BJ (cell line): ENCODE measurements at regions of chr20 and their contacts with region 1.

Region 1: DNA sequence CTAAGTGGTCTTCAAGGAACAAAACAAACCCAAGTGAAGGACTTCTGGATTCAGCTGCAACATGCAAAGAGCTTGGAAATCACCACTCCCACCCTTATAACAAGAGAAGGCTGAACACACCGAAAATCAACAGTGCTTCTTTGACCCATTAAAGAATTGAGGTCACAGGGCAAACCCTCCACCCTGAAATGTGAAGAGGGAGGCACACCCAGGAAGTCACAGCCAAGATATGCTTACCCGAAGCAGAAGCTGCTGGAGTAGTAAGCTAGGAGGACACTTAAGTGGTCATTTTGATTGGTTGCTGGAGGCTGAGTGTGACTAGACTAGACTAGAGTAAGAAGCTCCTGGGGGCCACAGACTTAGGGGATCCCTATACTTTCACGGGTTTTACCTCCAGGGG is 188.2 kb upstream of the SSTR4 start:
- DNase-seq: no peak
- H3K4me3 ChIP-seq: no peak overlapping the region
- H3K27me3 ChIP-seq: no peaks in the 10 kb centered on the region
- CTCF ChIP-seq: no peak

Region 2: DNA sequence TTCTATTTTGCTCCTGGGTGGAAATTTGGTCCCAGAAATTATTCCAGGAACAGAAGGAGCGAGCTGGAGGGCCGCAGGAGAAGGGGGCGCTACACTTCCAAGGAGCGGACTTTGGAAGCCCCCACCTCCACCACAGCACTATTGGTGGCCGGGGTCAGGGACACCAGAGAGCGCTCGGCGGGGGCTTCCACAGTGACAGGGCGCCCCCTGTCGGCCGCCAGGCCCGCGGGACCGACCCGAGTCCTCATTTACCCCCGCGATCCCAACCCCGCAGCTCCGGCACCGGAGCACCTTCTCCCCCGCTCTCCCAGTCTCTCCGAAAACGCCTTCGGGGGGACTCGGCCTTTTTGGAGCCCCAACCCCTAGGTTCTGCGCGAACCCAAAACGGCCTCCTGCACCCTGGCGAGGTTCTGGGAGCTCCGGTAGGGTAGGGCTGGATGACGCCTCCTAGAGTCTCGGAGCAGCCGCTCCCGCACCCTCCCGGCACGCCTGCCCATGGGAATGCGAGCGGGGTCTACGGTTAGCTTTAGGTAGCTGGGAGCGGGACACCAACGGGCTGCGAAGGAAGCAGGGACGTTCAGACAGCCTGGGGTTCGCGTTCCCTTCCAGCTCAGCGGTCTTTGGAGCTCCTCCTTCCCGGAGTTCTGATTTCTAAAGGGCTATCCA is 260.1 kb before region 1 on chr20:
- CTCF ChIA-PET with region 1: no interaction called
- POLR2A ChIA-PET with region 1: no interaction called
- DNase-seq: no peak
- H3K4me3 ChIP-seq: no peak overlapping the region
- H3K27me3 ChIP-seq: peaks cover 34% of the 10 kb centered on the region
- CTCF ChIP-seq: peak; percentile 32

Region 3: DNA sequence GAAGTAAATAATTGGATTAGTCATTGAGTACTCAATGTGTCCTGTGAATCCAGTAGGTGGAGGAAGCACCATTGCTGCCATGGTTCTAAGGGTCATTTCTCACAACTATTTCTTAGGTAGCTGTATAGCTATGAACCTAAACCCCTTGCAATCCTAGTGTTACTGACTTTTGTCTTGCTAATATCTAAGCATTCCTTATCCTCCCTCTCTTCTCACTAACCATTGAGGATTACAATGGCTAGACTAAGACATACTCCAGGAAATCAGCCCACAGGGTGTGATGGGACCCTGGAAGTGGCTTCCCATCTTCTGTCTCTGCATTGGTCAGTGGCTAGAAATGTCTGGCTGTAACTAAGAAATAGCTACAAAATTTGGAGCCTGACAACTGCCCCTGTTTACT is 235.2 kb before region 1 on chr20:
- CTCF ChIA-PET with region 1: no interaction called
- POLR2A ChIA-PET with region 1: no interaction called
- DNase-seq: no peak
- H3K4me3 ChIP-seq: no peak overlapping the region
- H3K27me3 ChIP-seq: no peaks in the 10 kb centered on the region
- CTCF ChIP-seq: no peak

Region 4: DNA sequence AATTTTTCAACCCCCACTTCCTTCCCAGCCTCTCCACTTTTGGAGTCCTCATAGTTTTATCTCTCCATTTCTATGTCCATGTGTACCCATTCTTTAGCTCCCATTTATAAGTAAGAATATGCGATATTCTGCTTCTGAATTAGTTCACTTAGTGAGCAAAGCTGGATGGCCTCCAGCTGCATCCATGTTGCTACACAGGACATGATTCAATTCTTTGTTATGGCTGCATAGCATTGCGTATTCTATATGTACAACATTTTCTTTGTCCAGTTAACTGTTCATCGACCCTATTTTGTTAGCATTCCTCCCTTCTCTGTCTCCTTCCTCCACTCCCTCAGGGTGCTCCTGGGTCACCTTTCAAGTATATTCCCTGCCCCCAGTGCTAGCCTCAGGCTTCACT is 21.8 kb before region 1 on chr20:
- CTCF ChIA-PET with region 1: no interaction called
- POLR2A ChIA-PET with region 1: no interaction called
- DNase-seq: no peak
- H3K4me3 ChIP-seq: no peak overlapping the region
- H3K27me3 ChIP-seq: no peaks in the 10 kb centered on the region
- CTCF ChIP-seq: no peak

Region 5: DNA sequence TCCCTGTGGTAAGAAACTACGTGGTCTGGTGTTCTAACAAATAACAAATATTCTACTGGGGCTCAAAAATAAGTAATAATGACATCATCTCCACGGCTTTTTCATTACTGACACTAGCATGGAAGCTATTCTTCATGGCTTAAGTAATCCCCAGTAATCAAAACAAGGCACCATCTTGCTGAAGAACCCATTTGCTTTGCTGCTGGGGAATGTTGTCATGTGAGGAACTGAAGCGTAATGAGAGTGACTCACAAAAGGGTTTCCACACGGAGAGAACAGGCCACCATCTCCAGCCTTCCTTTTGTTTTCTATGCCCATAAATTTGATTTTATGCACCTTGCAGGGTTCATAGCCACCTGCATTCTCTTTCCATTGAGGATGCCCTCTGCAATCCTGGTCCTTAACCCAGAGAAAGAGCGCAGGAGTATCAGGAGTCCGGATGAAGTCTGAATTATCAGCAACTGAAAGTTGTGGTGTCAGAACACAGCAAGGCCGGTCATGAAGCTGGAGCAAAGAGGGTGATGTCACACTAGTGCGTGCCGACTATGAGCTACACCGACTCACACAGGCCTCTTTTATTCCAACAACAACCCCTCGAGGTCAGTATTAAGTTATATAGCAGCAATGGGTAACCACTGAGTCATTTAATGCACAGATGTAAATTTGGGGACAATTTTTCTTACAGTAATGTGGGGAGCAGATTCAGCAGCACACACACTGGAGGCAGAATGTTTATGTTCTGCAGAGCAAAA is 14.5 kb after region 1 on chr20:
- CTCF ChIA-PET with region 1: interaction called, 10 read pairs
- POLR2A ChIA-PET with region 1: no interaction called
- DNase-seq: no peak
- H3K4me3 ChIP-seq: no peak overlapping the region
- H3K27me3 ChIP-seq: no peaks in the 10 kb centered on the region
- CTCF ChIP-seq: no peak

Region 6: GRCh38 chr20:23086056-23086566 is 239.2 kb after region 1 on chr20 and contains the start of gene CD93:
- CTCF ChIA-PET with region 1: no interaction called
- POLR2A ChIA-PET with region 1: no interaction called
- DNase-seq: no peak
- H3K4me3 ChIP-seq: no peak within 1 kb of the TSS
- H3K27me3 ChIP-seq: no peaks in the 10 kb centered on the region
- CTCF ChIP-seq: no peak
- polyA plus RNA-seq, gene CD93: not detected in 2 replicates